Prostate gland (tissue), 2 donors: ENCODE measurements at regions of chr6 and their contacts with region 1.

Region 1: DNA sequence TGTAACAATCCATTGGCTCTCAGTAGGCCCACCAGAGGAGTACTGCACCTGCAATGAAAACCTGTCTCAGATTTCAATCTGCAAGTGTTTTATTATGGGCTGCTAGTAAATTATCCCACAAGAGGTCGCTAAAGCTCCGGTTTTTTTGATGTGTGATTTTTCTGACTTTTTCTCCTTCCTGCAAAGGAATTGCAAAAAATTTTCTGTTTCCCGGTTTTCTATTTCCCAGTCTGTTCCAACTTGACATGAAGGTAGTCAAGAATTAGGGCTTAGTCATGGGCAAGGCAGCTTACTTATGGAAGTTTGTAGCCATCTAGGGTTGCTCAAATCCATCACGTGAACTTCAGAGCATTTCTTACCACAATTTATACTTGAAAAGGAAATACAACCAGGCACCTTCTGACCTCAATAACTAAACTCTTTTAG is 38.5 kb upstream of the AHI1 start:
- DNase-seq: peak; percentile 8
- H3K4me3 ChIP-seq: no peak overlapping the region
- H3K27ac ChIP-seq: no peak overlapping the region
- H3K4me1 ChIP-seq: no peaks in the 10 kb centered on the region
- H3K27me3 ChIP-seq: no peaks in the 10 kb centered on the region
- CTCF ChIP-seq: peak; percentile 35 to 67 (median 64)
- POLR2A ChIP-seq: no peak

Region 2: DNA sequence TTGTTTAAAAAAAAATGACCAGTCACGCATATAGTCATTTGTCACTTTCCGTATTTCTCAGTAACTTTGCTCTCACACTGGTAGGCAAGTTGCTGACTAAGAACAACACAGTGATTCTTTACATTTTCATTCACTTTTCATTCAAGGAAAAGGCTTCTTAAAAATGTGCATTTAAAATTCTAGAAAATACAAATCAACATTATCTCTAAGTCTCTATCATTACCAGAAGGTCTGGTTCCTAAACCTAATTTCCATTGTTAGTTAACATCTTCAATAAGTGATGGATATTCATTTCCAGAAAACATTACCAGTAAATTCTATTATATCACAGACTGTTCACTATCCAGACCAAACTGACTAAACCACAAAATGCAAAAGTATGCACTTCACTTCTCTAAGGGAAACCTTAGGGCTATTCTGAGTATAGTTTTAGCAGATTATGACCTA is 153.8 kb before region 1 on chr6:
- intact Hi-C with region 1: no loop called
- DNase-seq: no peak
- H3K4me3 ChIP-seq: no peak overlapping the region
- H3K27ac ChIP-seq: no peak overlapping the region
- H3K4me1 ChIP-seq: no peaks in the 10 kb centered on the region
- H3K27me3 ChIP-seq: no peaks in the 10 kb centered on the region
- CTCF ChIP-seq: no peak
- POLR2A ChIP-seq: no peak

Region 3: GRCh38 chr6:135657207-135657606 is 121.2 kb after region 1 on chr6:
- intact Hi-C with region 1: no loop called
- DNase-seq: no peak
- H3K4me3 ChIP-seq: no peak overlapping the region
- H3K27ac ChIP-seq: no peak overlapping the region
- H3K4me1 ChIP-seq: no peaks in the 10 kb centered on the region
- H3K27me3 ChIP-seq: no peaks in the 10 kb centered on the region
- CTCF ChIP-seq: no peak
- POLR2A ChIP-seq: no peak

Region 4: GRCh38 chr6:135707426-135707825 is 171.4 kb after region 1 on chr6:
- intact Hi-C with region 1: no loop called
- DNase-seq: no peak
- H3K4me3 ChIP-seq: no peak overlapping the region
- H3K27ac ChIP-seq: no peak overlapping the region
- H3K4me1 ChIP-seq: no peaks in the 10 kb centered on the region
- H3K27me3 ChIP-seq: no peaks in the 10 kb centered on the region
- CTCF ChIP-seq: no peak
- POLR2A ChIP-seq: no peak

Region 5: GRCh38 chr6:135938576-135939207 is 402.7 kb after region 1 on chr6:
- intact Hi-C with region 1: loop called (anchors 10 kb)
- DNase-seq: no peak
- H3K4me3 ChIP-seq: no peak overlapping the region
- H3K27ac ChIP-seq: peak overlapping the region; percentile 20 to 51
- H3K4me1 ChIP-seq: peaks cover 8% of the 10 kb centered on the region
- H3K27me3 ChIP-seq: no peaks in the 10 kb centered on the region
- CTCF ChIP-seq: peak in 2 of 4 experiments; percentile 11 to 33
- POLR2A ChIP-seq: no peak

Region 6: DNA sequence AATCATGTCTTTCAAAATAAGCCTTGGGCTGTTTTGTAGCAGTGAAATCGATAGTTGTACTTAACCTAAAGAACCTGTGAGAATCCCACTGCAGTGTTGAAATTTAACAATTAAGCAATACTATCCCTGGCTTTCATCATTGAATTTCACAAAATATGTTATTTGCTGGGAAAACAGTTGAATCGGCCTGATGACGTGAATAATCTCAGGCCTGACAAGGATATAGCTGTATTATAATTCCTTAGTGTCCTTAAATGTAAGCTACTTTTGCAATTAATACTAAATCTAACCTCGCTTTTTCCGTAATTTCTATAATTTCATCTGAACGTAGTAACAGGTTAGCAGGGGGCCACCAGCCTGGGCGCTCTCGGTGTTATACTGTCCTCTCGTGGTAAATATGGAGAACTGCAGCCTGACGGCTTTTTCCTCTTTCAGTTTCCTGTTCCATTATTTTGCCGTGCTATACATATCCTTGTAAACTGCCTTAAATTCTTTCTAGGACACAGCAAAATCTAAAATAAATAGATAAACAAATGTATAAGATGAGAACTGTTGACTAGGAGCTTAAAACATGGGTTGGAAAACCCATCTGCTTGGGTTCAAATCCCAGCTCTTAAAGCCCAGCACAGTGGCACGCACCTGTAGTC is 690.1 kb after region 1 on chr6:
- intact Hi-C with region 1: loop called (anchors 1 kb)
- DNase-seq: peak; percentile 24
- H3K4me3 ChIP-seq: no peak overlapping the region
- H3K27ac ChIP-seq: no peak overlapping the region
- H3K4me1 ChIP-seq: no peaks in the 10 kb centered on the region
- H3K27me3 ChIP-seq: no peaks in the 10 kb centered on the region
- CTCF ChIP-seq: peak; percentile 97 to 100 (median 99)
- POLR2A ChIP-seq: no peak

Region 7: DNA sequence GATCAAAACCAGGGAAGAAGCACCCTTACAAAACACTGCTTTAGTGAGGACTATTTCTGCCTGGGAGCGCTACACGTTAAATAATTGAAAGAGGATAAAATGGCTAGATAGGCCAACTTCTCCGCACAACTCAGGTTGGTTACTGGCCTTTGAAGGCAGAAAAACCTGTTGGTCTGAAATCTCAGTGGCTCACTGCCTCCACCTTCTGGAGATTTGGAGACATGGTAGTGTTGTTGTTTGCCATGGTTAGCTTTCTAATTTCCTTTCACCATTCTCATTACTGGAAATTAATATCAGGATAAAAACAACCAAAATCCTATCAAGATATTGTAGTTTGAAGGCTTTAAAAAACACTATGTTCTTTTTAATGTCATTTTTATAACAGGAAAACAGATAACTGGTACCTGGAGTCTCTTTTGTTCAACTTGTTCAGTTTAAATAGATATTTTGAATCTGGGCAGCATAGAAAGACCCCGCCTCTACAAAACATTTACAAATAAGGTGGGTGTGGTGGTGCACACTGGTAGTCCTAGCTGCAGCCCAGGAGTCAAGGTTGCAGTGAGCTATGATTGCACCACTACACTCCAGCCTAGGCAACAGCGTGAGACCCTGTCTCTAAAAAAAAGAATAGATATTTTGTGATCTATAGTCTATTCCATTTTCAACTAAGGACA is 781.2 kb after region 1 on chr6:
- intact Hi-C with region 1: loop called (anchors 10 kb)
- DNase-seq: peak; percentile 67
- H3K4me3 ChIP-seq: no peak overlapping the region
- H3K27ac ChIP-seq: peak overlapping the region; percentile 27 to 38
- H3K4me1 ChIP-seq: no peaks in the 10 kb centered on the region
- H3K27me3 ChIP-seq: no peaks in the 10 kb centered on the region
- CTCF ChIP-seq: peak; percentile 53 to 91 (median 80)
- POLR2A ChIP-seq: no peak